Calu3 (cell line): ENCODE measurements at regions of chr3 and their contacts with region 1.

Region 1: DNA sequence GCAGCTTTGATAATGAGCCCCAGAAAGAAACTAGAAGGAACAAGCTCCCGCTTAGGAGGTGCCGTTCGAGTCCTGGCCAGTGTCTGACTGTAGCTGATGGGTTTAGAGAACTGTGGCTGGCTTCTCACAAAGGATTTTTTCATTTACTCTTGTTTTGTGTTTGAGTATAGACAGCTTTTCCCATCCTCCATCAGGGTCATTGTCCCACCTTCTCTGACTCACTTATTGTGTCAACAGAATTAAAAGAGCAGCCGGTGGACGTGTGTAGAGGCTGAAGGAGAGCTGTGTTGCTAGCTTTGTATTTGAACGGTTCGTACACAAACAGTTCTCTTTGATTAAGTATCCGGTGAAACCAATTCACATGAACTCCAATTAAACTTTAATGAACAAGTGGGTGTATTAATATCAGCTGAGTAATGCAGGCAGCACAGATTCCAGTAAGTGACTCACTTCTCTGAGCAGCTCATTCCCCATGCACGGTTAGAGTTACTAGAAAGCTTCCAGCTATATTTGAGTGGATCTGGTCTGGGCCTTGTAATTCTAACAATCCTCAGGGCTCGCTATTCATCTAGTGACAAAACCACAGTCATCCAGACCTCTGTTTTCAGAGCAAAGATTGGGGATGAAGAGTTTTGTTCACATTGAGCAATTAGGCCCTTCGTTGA is 141.0 kb downstream of the LPP start:
- DNase-seq: peak; percentile 82
- H3K4me3 Mint-ChIP-seq: peak overlapping the region; percentile 11
- H3K27ac Mint-ChIP-seq: peak overlapping the region; percentile 81
- H3K4me1 Mint-ChIP-seq: peaks cover 93% of the 10 kb centered on the region
- H3K27me3 Mint-ChIP-seq: no peaks in the 10 kb centered on the region
- CTCF ChIP-seq: no peak

Region 2: DNA sequence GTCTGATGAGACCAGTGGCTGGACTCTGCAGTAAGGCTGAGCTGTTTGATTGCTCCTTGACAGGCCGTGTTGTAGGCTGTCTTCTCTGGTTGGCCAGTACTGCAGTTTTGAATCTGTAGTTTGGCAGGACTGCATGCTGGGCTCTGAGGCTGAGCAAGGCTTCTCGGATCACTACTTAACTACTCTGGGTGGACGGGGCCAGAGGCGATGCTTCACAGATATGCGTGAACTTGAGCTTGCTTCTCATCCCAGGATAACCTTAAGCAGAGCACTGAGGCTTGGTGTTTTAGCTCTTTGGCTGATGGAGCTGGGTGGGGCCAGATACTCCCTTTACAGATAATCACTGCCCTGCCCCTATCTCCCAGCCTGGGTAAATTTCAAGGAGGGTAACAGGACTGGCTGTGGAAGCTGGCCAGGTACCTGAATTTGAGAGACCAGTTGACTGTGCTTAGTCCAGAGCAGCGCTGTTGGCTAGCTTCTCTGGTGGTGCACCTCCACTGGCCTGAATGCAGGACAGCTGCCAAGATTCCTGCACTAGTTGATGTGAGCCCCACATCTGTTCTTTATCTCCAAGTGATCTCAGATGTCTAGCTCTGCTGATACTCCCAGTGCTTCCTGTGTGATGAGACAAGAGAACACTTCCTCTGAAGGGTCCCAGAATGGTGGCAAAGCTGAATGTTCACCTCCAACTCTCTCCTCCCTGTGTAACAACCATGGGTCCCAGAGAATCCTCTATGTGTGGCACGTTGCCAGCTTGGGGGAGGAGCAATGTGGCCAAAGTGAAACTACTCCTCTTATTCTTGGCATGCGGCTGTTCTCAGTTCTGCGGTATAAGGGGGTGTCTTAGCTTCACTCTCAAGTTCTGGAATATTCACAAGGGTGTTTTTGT is 1193.5 kb before region 1 on chr3:
- CTCF ChIA-PET with region 1: no interaction called
- intact Hi-C with region 1: no loop called
- DNase-seq: peak; percentile 72
- H3K4me3 Mint-ChIP-seq: peak overlapping the region; percentile 19
- H3K27ac Mint-ChIP-seq: no peak overlapping the region
- H3K4me1 Mint-ChIP-seq: peaks cover 19% of the 10 kb centered on the region
- H3K27me3 Mint-ChIP-seq: no peaks in the 10 kb centered on the region
- CTCF ChIP-seq: no peak

Region 3: DNA sequence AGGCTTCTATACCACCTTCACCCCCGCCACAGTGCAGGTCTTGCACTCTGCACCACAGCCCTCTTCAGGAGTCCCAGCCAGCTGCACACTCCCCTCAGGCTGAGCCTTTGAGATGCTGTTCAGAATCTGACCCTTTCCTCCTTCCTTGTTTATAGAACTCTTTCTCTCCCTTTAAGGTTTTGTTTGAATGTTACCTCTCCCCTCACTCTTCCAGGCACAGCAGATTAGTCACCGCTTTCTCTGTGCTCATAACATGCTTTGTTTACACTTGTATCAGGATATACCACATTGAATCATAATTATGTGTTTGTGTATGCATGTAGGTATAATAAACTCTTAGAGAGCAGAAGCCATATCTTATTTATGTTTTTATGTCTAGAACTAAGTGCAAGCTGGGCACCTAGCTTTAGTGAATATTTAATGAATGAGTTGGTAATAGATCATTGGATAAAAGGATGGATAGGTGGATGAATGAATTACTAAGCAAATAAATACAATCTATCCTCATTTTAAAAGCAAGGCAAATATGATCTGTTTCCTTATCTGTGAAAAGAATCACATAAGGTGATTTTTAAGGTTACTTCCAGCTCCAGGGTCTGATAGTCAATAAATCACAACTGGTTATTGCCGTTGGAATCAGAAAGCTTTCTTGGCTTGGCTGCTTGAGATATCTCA is 381.2 kb before region 1 on chr3:
- CTCF ChIA-PET with region 1: no interaction called
- intact Hi-C with region 1: no loop called
- DNase-seq: peak; percentile 55
- H3K4me3 Mint-ChIP-seq: peak overlapping the region; percentile 1
- H3K27ac Mint-ChIP-seq: peak overlapping the region; percentile 3
- H3K4me1 Mint-ChIP-seq: peaks cover 30% of the 10 kb centered on the region
- H3K27me3 Mint-ChIP-seq: no peaks in the 10 kb centered on the region
- CTCF ChIP-seq: no peak

Region 4: DNA sequence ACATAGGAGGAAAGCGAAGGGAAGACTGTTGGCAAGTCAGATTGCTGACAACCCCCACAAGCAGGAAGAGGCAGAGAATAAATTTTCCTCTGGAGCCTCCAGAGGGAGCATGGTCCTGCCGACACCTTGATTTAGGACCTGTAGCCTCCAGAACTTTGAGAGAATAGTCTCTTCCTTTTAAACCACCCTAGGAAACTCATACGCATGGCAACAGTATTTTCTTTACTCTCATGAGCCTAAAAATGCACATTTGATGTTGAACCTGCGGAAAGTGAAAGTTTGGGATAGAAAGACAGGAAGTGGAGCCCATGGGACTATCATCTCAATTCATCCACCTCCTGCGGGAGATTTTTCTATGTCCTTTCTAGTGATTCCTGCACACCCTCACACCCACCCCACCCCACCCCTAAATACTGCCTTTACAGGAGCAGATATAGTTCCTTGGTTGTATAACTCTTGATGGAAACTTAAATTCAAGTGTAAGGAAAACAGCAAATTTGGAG is 257.7 kb before region 1 on chr3:
- CTCF ChIA-PET with region 1: no interaction called
- intact Hi-C with region 1: loop called (anchors 10 kb)
- DNase-seq: peak; percentile 59
- H3K4me3 Mint-ChIP-seq: no peak overlapping the region
- H3K27ac Mint-ChIP-seq: no peak overlapping the region
- H3K4me1 Mint-ChIP-seq: peaks cover 29% of the 10 kb centered on the region
- H3K27me3 Mint-ChIP-seq: no peaks in the 10 kb centered on the region
- CTCF ChIP-seq: peak; percentile 65

Region 5: GRCh38 chr3:188219147-188219546 is 75.8 kb before region 1 on chr3:
- CTCF ChIA-PET with region 1: interaction called, 3 read pairs
- intact Hi-C with region 1: loop called (anchors 2 kb)
- DNase-seq: peak; percentile 80
- H3K4me3 Mint-ChIP-seq: no peak overlapping the region
- H3K27ac Mint-ChIP-seq: peak overlapping the region; percentile 62
- H3K4me1 Mint-ChIP-seq: peaks cover 88% of the 10 kb centered on the region
- H3K27me3 Mint-ChIP-seq: no peaks in the 10 kb centered on the region
- CTCF ChIP-seq: no peak

Region 6: DNA sequence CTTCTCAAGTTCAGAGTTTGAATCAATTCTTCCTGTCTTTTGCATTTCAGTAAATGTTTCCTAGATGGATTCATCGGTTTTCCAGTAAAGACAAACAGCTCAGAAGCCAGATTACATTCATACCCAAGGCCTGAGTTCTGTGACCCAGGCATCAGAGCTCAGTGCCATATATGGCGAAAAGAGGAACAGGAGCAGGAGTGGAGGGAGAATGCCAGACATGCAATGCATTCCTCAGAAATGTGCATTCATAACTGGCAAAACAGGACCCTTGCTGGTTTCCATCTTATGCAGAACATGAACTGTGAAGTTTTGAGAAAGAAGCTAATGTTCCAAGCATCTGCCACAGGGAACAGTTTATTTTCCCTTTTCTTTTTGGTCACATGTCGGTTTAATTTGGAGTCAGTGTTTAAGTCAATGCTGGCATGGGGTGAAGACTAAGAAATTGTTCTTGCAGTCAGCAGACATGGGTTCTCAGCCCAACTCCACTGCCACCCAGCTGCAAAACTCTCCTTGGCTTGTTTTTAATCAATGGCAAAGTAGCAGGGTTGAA is 24.5 kb before region 1 on chr3:
- CTCF ChIA-PET with region 1: interaction called, 12 read pairs
- intact Hi-C with region 1: no loop called
- DNase-seq: peak; percentile 80
- H3K4me3 Mint-ChIP-seq: peak overlapping the region; percentile 24
- H3K27ac Mint-ChIP-seq: peak overlapping the region; percentile 88
- H3K4me1 Mint-ChIP-seq: peaks cover 55% of the 10 kb centered on the region
- H3K27me3 Mint-ChIP-seq: no peaks in the 10 kb centered on the region
- CTCF ChIP-seq: no peak

Region 7: GRCh38 chr3:188348435-188349244 is 53.7 kb after region 1 on chr3:
- CTCF ChIA-PET with region 1: interaction called, 3 read pairs
- intact Hi-C with region 1: loop called (anchors 2 kb)
- DNase-seq: peak; percentile 88
- H3K4me3 Mint-ChIP-seq: peak overlapping the region; percentile 18
- H3K27ac Mint-ChIP-seq: peak overlapping the region; percentile 69
- H3K4me1 Mint-ChIP-seq: peaks cover 65% of the 10 kb centered on the region
- H3K27me3 Mint-ChIP-seq: no peaks in the 10 kb centered on the region
- CTCF ChIP-seq: no peak

Region 8: GRCh38 chr3:188432802-188433520 is 138.0 kb after region 1 on chr3:
- CTCF ChIA-PET with region 1: interaction called, 3 read pairs
- intact Hi-C with region 1: loop called (anchors 1 kb)
- DNase-seq: peak; percentile 34
- H3K4me3 Mint-ChIP-seq: peak overlapping the region; percentile 37
- H3K27ac Mint-ChIP-seq: peak overlapping the region; percentile 49
- H3K4me1 Mint-ChIP-seq: peaks cover 66% of the 10 kb centered on the region
- H3K27me3 Mint-ChIP-seq: no peaks in the 10 kb centered on the region
- CTCF ChIP-seq: no peak